ENCODE measurements at regions of chr7 and their contacts with region 1.

Region 1: DNA sequence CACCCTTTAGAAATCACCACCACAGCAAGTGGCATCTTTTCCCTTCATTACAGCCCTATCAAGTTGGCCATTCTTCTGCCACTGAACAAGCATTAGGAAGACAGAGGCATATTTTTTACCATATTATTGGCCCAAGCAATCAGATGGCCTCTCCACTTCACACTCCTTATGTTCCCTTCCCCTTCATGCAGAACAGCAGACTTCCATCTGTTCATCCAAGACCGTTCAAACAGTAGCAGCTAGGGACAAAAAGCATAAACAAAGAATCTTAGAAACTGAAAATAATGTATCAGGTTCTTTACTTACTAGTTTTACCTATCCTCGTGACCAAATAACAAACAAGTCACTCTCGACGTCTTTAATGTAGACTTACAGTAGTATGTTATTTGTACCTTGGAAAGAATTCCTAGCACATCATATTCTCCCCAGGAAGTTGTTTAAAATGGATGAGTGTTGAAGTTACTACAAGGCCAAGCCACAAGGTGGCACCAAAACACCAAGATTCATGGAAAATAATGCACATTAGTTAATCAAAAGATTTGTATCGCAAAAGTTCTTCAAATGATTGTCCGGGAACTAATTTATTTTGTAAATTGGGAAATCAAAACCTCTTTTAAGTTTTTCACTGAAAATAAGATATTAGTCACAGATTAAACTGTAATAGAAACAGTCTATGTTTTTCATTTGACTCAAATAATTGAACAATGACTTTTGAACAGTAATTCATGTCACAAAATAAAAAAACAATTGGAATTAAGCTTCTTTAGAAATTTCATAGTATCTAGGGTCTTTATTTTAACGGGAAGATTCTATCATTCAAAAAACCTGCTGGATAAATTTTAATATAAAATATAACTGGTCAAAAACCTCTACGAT is 112.1 kb downstream of the VPS41 start:
- DNase-seq: peak; percentile 25 to 64 (median 37)
- ATAC-seq: peak; percentile 69
- H3K4me3 ChIP-seq: no peak overlapping the region
- H3K27ac ChIP-seq: no peak overlapping the region
- H3K4me1 ChIP-seq: no peaks in the 10 kb centered on the region
- H3K27me3 ChIP-seq: no peaks in the 10 kb centered on the region
- CTCF ChIP-seq: peak; percentile 22 to 78 (median 65); a peak in 5 of 6 replicates
- EP300 ChIP-seq: no peak
- POLR2A ChIP-seq: no peak
- RAD21 ChIP-seq: peak; percentile 79 to 88

Region 2: DNA sequence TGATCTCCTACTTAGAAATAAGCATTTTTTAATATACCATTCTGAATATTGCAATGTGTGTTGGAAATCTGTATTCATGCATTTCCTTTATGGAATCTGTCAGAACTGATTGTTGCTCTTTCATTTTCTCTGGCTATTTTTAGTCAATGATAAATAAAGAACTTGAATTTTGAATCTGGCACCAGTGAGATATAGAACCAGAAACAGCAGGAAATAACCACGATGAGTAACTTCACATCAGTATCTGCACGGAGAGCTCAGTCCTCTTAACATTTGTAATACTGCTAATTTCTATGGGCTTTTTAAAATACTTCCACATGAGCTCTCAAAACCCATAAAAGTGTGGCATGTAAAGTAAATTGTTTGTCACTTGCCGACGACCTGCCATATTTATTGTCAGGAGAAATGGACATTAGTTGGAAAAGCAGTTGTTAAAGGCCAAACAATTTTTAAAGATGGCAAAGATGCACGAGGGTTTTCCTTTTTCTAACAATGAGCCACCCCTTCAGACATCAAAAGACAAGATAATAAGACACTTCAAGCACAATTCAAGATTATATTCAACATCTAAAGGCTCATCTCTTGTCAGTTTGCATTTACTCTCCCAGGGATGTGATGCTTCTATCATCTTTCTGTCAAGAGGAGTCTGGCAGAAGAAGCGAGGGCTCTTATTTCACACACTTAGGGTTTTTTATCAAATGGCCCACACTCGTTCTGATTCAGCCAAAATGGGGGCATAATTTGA is 299.2 kb after region 1 on chr7:
- CTCF ChIA-PET with region 1: no interaction called
- POLR2A ChIA-PET with region 1: no interaction called
- in situ Hi-C with region 1: no loop called
- intact Hi-C with region 1: loop called (anchors 10 kb)
- DNase-seq: no peak
- ATAC-seq: no peak
- H3K4me3 ChIP-seq: no peak overlapping the region
- H3K27ac ChIP-seq: no peak overlapping the region
- H3K4me1 ChIP-seq: no peaks in the 10 kb centered on the region
- H3K27me3 ChIP-seq: no peaks in the 10 kb centered on the region; a peak in 1 of 5 replicates
- CTCF ChIP-seq: no peak
- EP300 ChIP-seq: no peak
- POLR2A ChIP-seq: no peak
- RAD21 ChIP-seq: no peak

Region 3: GRCh38 chr7:39517240-39517639 is 720.4 kb after region 1 on chr7:
- CTCF ChIA-PET with region 1: interaction called, 10 read pairs
- POLR2A ChIA-PET with region 1: no interaction called
- in situ Hi-C with region 1: no loop called
- intact Hi-C with region 1: loop called (anchors 2 kb)
- DNase-seq: no peak
- ATAC-seq: no peak
- H3K4me3 ChIP-seq: no peak overlapping the region
- H3K27ac ChIP-seq: no peak overlapping the region
- H3K4me1 ChIP-seq: no peaks in the 10 kb centered on the region; a peak in 1 of 5 replicates
- H3K27me3 ChIP-seq: peaks cover 8 to 22% of the 10 kb centered on the region in 2 experiments; a peak in 3 of 5 replicates
- CTCF ChIP-seq: no peak
- EP300 ChIP-seq: no peak
- POLR2A ChIP-seq: no peak
- RAD21 ChIP-seq: no peak

Region 4: DNA sequence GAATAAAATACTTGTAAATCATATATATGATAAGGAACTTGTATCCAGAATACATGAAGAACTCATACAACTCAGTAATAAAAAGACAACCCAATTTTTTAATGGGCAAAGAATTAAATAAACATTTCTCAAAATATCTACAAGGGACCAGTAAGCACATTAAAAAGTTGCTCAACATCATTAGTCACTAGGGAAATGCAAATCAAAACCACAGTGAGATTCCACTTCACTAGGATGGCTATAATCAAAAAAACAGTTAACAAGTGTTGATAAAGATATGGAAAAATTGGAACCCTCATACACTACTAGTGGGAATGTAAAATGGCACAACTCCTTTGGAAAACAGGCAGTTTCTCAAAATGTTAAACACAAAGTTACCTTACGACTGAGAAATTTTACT is 729.1 kb after region 1 on chr7:
- CTCF ChIA-PET with region 1: interaction called, 3 read pairs
- POLR2A ChIA-PET with region 1: no interaction called
- in situ Hi-C with region 1: no loop called
- intact Hi-C with region 1: loop called (anchors 2 kb)
- DNase-seq: no peak
- ATAC-seq: no peak
- H3K4me3 ChIP-seq: no peak overlapping the region
- H3K27ac ChIP-seq: no peak overlapping the region
- H3K4me1 ChIP-seq: no peaks in the 10 kb centered on the region
- H3K27me3 ChIP-seq: peaks cover 9 to 15% of the 10 kb centered on the region in 2 experiments
- CTCF ChIP-seq: no peak
- EP300 ChIP-seq: no peak
- POLR2A ChIP-seq: no peak
- RAD21 ChIP-seq: no peak